Activated CD4-positive, alpha-beta T cell treated with anti-CD3 and anti-CD28 coated beads, Interleukin-2, amount 10 ng/mL, durations not matched to agents 7 days and 5 days (primary cell): ENCODE measurements at regions of chr21 and their contacts with region 1.

Region 1: DNA sequence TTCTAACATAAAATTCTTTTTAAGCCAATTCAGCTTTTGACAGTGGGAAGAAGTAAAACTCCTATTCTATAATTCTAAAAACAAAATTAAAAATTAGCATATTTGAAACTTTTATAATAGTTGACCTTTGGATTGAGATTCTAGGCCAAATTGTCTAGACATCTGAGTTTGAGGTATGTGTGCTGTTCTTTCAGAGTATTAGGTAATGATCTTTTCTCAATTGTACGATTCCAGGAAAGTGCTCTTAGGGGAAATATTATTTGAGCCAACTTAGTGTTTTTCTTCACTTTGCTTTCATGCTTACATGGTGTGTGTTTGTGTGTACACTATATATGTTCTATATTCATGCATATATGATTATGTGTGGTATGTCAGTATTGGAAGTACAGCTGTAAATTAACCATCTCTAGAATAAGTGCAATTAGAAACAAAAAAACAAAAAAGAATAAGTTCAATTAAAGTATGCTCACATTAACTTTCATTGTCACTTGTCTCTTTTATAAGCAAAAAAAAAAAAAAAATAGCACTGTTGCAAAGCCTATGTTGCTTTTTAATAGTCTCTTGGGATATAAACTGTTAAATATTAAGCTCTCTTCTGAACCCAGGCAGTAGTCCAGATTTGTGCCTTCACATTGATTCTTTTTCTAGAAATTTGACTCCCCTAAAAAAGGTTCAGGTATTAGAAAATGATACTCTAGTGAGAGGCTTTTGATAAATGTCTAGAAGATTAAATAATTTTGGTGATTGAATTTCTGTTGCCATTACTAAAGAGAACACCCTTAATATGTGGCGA is 132.2 kb downstream of the ATP5PO start:
- DNase-seq: no peak
- H3K4me3 Mint-ChIP-seq: no peak overlapping the region
- H3K27ac Mint-ChIP-seq: no peak overlapping the region
- H3K4me1 Mint-ChIP-seq: no peaks in the 10 kb centered on the region
- H3K27me3 Mint-ChIP-seq: no peaks in the 10 kb centered on the region

Region 2: GRCh38 chr21:34648739-34649297 is 865.4 kb after region 1 on chr21:
- CTCF ChIA-PET with region 1: no interaction called
- POLR2A ChIA-PET with region 1: interaction called, 12 read pairs
- DNase-seq: no peak
- H3K4me3 Mint-ChIP-seq: no peak overlapping the region
- H3K27ac Mint-ChIP-seq: no peak overlapping the region
- H3K4me1 Mint-ChIP-seq: peaks cover 4% of the 10 kb centered on the region
- H3K27me3 Mint-ChIP-seq: peaks cover 13% of the 10 kb centered on the region